ENCODE measurements at regions of chr5 and their contacts with region 1.

Region 1: DNA sequence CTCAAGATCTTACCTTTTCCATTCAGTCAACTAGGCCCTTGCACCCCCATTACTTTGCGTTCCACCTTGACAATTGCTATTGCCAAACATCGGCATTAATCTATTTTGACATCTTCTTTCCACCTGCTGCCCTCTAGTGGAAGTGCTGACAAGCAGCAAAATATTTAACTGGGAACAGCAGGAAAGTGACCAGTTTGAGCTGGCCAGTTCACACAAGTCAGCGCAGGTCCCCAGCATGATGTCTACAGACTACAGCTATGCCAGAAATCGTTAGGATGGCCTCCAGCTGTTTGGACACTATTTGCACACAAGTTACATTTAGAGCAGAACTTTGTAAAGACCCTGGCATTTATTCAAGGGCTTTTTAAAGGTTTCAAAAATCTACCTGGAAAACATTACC is 160.1 kb downstream of the GHR start:
- DNase-seq: peak; percentile 39
- ATAC-seq: peak; percentile 37
- H3K4me3 Mint-ChIP-seq: no peak overlapping the region
- H3K27ac Mint-ChIP-seq: no peak overlapping the region
- H3K4me1 Mint-ChIP-seq: peaks cover 3% of the 10 kb centered on the region
- H3K27me3 Mint-ChIP-seq: peaks cover 15% of the 10 kb centered on the region
- CTCF ChIP-seq: peak; percentile 72

Region 2: DNA sequence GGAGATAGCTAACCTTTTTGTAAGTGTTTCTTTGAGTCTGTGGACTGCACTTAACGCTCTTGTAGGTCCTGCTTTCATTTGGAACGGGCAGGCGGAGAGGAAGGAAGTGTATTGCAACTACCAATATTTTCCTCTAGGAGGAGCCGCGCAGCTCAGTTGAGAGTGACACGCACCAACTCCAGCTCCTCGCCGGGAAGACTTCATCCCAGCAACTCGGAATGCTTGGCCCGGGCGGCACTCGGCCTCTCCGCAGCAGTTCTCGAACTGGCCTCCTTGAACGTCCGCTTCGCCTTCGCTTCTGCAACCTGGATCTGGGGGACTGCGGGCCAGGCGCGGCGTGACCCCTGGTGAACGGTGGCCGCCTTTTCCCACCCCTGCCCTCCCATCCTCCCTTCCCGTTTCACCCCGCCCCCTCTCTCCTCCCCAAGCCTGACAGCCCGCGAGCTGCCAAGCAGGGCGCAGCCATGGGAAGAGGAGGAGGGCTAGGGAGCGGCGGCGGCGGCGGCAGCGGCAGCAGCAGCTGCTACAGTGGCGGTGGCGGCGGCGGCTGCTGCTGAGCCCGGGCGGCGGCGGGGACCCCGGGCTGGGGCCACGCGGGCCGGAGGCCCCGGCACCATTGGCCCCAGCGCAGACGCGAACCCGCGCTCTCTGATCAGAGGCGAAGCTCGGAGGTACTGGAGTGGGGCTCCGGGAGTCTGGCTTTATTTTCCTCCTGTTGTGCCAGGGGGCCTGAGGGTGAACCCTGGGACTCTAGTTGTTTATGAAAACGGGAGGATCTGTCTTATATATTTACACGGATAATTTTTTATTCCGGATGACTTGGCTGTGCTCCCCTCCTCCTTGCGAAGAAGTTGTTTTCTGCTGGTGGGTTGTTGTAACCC is 159.8 kb before region 1 on chr5 and contains the start of gene GHR:
- CTCF ChIA-PET with region 1: interaction called, 4 read pairs
- POLR2A ChIA-PET with region 1: no interaction called
- intact Hi-C with region 1: loop called (anchors 10 kb)
- DNase-seq: peak; percentile 29
- ATAC-seq: peak; percentile 67
- H3K4me3 Mint-ChIP-seq: no peak within 1 kb of the TSS
- H3K27ac Mint-ChIP-seq: no peak within 1 kb of the TSS
- H3K4me1 Mint-ChIP-seq: no peaks in the 10 kb centered on the region
- H3K27me3 Mint-ChIP-seq: peaks cover 11% of the 10 kb centered on the region
- CTCF ChIP-seq: peak; percentile 66
- total RNA-seq, gene GHR: not detected

Region 3: GRCh38 chr5:42570966-42571960 is 12.1 kb before region 1 on chr5:
- CTCF ChIA-PET with region 1: interaction called, 13 read pairs
- POLR2A ChIA-PET with region 1: no interaction called
- intact Hi-C with region 1: no loop called
- DNase-seq: no peak
- ATAC-seq: no peak
- H3K4me3 Mint-ChIP-seq: no peak overlapping the region
- H3K27ac Mint-ChIP-seq: no peak overlapping the region
- H3K4me1 Mint-ChIP-seq: no peaks in the 10 kb centered on the region
- H3K27me3 Mint-ChIP-seq: peaks cover 14% of the 10 kb centered on the region
- CTCF ChIP-seq: no peak

Region 4: GRCh38 chr5:42605490-42605889 is 22.2 kb after region 1 on chr5:
- CTCF ChIA-PET with region 1: interaction called, 11 read pairs
- POLR2A ChIA-PET with region 1: no interaction called
- intact Hi-C with region 1: no loop called
- DNase-seq: no peak
- ATAC-seq: no peak
- H3K4me3 Mint-ChIP-seq: no peak overlapping the region
- H3K27ac Mint-ChIP-seq: no peak overlapping the region
- H3K4me1 Mint-ChIP-seq: no peaks in the 10 kb centered on the region
- H3K27me3 Mint-ChIP-seq: peaks cover 6% of the 10 kb centered on the region
- CTCF ChIP-seq: no peak

Measured in activated CD8-positive, alpha-beta T cell treated with anti-CD3 and anti-CD28 coated beads for 36 hours (primary cell).